ENCODE measurements at regions of chr7 and their contacts with region 1.

Region 1: GRCh38 chr7:50595491-50596102 is 30.4 kb upstream of the DDC start:
- DNase-seq: peak in 4 of 5 donors; percentile 43 to 68 (median 55)
- H3K4me3 ChIP-seq: no peak overlapping the region
- H3K27ac ChIP-seq: no peak overlapping the region
- H3K4me1 ChIP-seq: peaks cover 3% of the 10 kb centered on the region
- H3K27me3 ChIP-seq: no peaks in the 10 kb centered on the region
- CTCF ChIP-seq: peak in 2 of 3 donors; percentile 54 to 58
- EP300 ChIP-seq: no peak
- POLR2A ChIP-seq: no peak

Region 2: GRCh38 chr7:50436133-50436806 is 159.3 kb before region 1 on chr7:
- intact Hi-C with region 1: no loop called
- DNase-seq: peak in 1 of 5 donors; percentile 28
- H3K4me3 ChIP-seq: no peak overlapping the region
- H3K27ac ChIP-seq: no peak overlapping the region
- H3K4me1 ChIP-seq: peaks cover 2% of the 10 kb centered on the region
- H3K27me3 ChIP-seq: no peaks in the 10 kb centered on the region
- CTCF ChIP-seq: no peak
- EP300 ChIP-seq: no peak
- POLR2A ChIP-seq: no peak

Region 3: DNA sequence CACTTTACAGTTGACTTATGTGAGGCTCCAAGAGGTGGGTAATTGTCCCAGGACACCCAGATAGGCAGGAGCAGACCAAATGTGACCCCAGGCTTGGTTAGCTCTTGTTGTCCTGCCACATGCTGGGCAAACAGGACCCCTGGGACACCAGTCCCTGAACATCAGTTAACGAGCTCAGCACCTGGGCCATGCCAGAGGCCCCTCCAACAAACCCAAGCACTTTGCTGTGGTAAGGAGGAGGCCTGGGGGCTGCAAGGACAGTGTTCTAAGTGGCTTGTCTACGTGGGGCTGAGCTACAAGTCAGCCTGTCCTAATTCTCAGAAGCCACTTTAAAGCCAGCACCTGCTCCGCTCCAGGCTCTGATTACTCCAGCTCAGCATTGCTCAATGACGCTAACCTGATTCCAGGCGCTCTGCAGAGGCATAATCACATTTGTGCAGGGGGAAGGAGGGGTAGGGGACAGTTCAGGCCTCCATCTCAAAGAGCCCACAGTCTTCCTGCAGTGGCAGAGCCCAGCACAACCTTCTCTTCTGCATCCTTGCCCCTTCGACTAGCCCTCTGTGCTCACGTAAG is 87.6 kb before region 1 on chr7:
- intact Hi-C with region 1: no loop called
- DNase-seq: no peak
- H3K4me3 ChIP-seq: no peak overlapping the region
- H3K27ac ChIP-seq: no peak overlapping the region
- H3K4me1 ChIP-seq: peaks cover 2% of the 10 kb centered on the region
- H3K27me3 ChIP-seq: no peaks in the 10 kb centered on the region
- CTCF ChIP-seq: no peak
- EP300 ChIP-seq: no peak
- POLR2A ChIP-seq: no peak

Region 4: GRCh38 chr7:50653126-50653864 is 57.7 kb after region 1 on chr7:
- intact Hi-C with region 1: loop called in 1 of 4 experiments (anchors 10 kb)
- DNase-seq: peak in 2 of 5 donors; percentile 40 to 73
- H3K4me3 ChIP-seq: no peak overlapping the region
- H3K27ac ChIP-seq: peak overlapping the region in 1 of 2 donors; percentile 22
- H3K4me1 ChIP-seq: peaks cover 11% of the 10 kb centered on the region
- H3K27me3 ChIP-seq: no peaks in the 10 kb centered on the region
- CTCF ChIP-seq: no peak
- EP300 ChIP-seq: no peak
- POLR2A ChIP-seq: peak; percentile 11

Measured in ovary (tissue), 10 donors.